HepG2 (cell line): ENCODE measurements at regions of chr12 and their contacts with region 1.

Region 1: GRCh38 chr12:48157018-48157888 is at the start of gene ASB8:
- DNase-seq: peak; percentile 98
- ATAC-seq: peak; percentile 96
- H3K4me3 ChIP-seq: peak within 1 kb of the TSS; percentile 85 to 99 (median 89)
- H3K27ac ChIP-seq: peak within 1 kb of the TSS; percentile 67
- H3K4me1 ChIP-seq: peaks cover 13% of the 10 kb centered on the region
- H3K27me3 ChIP-seq: no peaks in the 10 kb centered on the region
- CTCF ChIP-seq: peak; percentile 77
- EP300 ChIP-seq: no peak
- POLR2A ChIP-seq: peak; percentile 50 to 65
- RAD21 ChIP-seq: peak; percentile 16; the same call in 1 of the 2 replicates
- total RNA-seq, gene ASB8: 15.5 and 17.5 TPM in 2 replicates

Region 2: GRCh38 chr12:48105862-48106680 is 51.2 kb before region 1 on chr12 and contains the start of gene SENP1:
- CTCF ChIA-PET with region 1: no interaction called
- POLR2A ChIA-PET with region 1: interaction called, 37 read pairs
- in situ Hi-C with region 1: no loop called
- intact Hi-C with region 1: loop called (anchors 1 kb)
- DNase-seq: peak; percentile 80
- ATAC-seq: peak; percentile 93
- H3K4me3 ChIP-seq: peak within 1 kb of the TSS; percentile 85 to 95 (median 89)
- H3K27ac ChIP-seq: peak within 1 kb of the TSS; percentile 99
- H3K4me1 ChIP-seq: peaks cover 25% of the 10 kb centered on the region
- H3K27me3 ChIP-seq: no peaks in the 10 kb centered on the region; a peak in 1 of 5 replicates
- CTCF ChIP-seq: peak; percentile 46
- EP300 ChIP-seq: 0 out of 4 replicates have a peak, but pooled peaks of 1 of the 2 experiments have one; percentile 19
- POLR2A ChIP-seq: peak; percentile 61 to 79
- RAD21 ChIP-seq: peak; percentile 40; the same call in 1 of the 2 replicates
- total RNA-seq, gene SENP1: 20.2 and 25.3 TPM in 2 replicates

Region 3: DNA sequence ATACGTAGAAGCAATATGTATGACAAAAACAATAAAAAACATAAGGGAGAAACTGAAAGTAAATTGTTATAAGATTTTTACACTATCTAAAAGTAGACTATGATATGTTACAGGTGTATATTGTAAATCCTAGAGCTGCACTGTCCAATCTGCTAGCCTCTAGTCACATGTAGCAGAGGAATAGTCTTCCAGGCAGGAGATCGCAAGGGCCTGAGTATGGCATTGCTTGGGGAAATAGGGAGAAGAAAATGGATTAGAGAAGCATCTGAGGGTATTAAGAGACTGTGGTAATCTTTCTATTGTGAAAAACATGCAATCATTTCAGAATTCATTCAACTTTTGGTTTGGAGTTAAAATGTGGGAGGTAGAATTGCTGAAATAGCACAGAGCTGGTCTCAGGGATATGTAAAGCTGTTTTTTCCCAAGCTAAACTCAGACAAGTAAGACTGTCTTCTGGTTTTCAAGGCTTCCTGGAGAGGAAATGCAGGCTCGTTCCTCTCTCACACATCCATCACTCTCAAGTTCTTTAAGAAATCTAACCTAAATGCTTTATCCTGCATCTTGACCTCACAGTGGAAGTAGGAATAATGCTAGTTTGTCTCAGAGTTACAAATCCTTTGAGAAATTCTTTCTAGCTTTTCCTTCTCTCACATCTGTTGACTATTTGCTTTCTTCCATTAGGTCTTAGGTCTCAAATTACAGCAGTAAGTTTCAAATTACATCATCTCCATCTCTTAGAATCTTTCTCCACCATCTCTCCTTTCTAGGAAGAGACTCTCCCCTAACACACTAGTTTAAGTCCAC is 18.6 kb after region 1 on chr12:
- CTCF ChIA-PET with region 1: no interaction called
- POLR2A ChIA-PET with region 1: no interaction called
- in situ Hi-C with region 1: no loop called
- intact Hi-C with region 1: no loop called
- DNase-seq: no peak
- ATAC-seq: no peak
- H3K4me3 ChIP-seq: no peak overlapping the region
- H3K27ac ChIP-seq: no peak overlapping the region
- H3K4me1 ChIP-seq: no peaks in the 10 kb centered on the region
- H3K27me3 ChIP-seq: peaks cover 0 to 14% of the 10 kb centered on the region in 2 experiments; a peak in 3 of 5 replicates
- CTCF ChIP-seq: no peak
- EP300 ChIP-seq: no peak
- POLR2A ChIP-seq: no peak
- RAD21 ChIP-seq: no peak

Region 4: DNA sequence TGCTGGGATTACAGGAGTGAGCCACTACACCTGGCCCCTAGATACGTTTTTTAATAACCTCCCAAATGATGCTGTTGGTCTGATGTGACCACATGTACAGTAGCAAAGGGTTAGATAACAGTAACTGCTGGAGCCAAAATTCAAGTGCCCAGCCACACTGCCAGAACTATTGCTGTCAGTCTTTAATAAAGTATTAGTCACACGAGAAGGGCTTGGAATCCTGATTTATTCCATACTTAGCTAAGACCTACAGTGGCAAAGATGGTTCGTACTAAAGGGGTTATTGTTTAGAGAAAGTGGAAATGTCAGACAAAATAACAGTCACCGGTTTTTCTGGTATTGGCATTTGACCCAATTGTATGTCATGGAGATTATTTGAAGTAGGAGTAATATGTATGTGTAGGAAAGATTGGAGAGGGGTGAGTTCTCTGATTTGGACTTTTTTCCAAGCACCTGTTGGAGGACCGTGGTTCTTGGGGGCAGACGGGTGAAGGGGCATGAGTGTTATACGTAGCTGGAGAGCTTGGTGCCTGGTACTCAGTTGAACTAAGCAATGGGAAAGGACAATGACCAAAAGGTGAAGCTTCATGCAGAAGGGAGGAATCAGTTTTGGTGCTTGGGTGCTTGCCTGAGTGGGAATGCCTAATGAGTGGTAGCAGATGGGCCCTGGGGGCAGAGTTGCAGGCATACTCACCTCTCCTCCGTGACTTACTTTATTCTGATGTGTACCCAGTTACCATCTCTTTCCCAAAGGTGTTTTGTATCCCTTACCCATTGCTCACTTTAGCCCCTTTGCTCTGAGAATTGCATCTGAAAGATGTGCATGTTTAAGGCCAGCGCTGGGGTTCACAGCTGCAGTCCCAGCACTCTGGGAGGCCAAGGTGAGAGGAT is 1117.4 kb after region 1 on chr12:
- CTCF ChIA-PET with region 1: no interaction called
- POLR2A ChIA-PET with region 1: no interaction called
- in situ Hi-C with region 1: no loop called
- intact Hi-C with region 1: no loop called
- DNase-seq: no peak
- ATAC-seq: peak; percentile 4; the same call in 2 of the 3 replicates
- H3K4me3 ChIP-seq: no peak overlapping the region
- H3K27ac ChIP-seq: no peak overlapping the region
- H3K4me1 ChIP-seq: peaks cover 22% of the 10 kb centered on the region
- H3K27me3 ChIP-seq: peaks cover 2% of the 10 kb centered on the region in 2 experiments; a peak in 1 of 5 replicates
- CTCF ChIP-seq: no peak
- EP300 ChIP-seq: no peak
- POLR2A ChIP-seq: peak in 1 of 2 experiments; percentile 25; a peak in 1 of 4 replicates
- RAD21 ChIP-seq: no peak